CD4-positive, alpha-beta T cell (primary cell): ENCODE measurements at regions of chr4 and their contacts with region 1.

Region 1: GRCh38 chr4:83455281-83456129 is at the starts of genes HELQ and MRPS18C:
- DNase-seq: peak; percentile 85 to 99 (median 92)
- ATAC-seq: peak; percentile 86
- H3K4me3 ChIP-seq: peak within 1 kb of the TSS; percentile 88
- H3K4me3 Mint-ChIP-seq: peak within 1 kb of the TSS; percentile 99
- H3K27ac ChIP-seq: peak within 1 kb of the TSS; percentile 99 to 100
- H3K27ac Mint-ChIP-seq: peak within 1 kb of the TSS; percentile 100
- H3K4me1 ChIP-seq: peaks cover 12% of the 10 kb centered on the region
- H3K4me1 Mint-ChIP-seq: peaks cover 70% of the 10 kb centered on the region
- H3K27me3 ChIP-seq: no peaks in the 10 kb centered on the region
- H3K27me3 Mint-ChIP-seq: no peaks in the 10 kb centered on the region
- CTCF ChIP-seq: no peak
- total RNA-seq, gene HELQ: 21.5 to 24.1 TPM
- total RNA-seq, gene MRPS18C: 15.7 to 18.0 TPM

Region 2: GRCh38 chr4:82373816-82374625 is 1081.5 kb before region 1 on chr4 and contains the start of gene HNRNPD:
- CTCF ChIA-PET with region 1: no interaction called
- POLR2A ChIA-PET with region 1: interaction called, 3 read pairs
- intact Hi-C with region 1: loop called in 1 of 2 experiments (anchors 5 kb)
- DNase-seq: peak; percentile 77 to 99 (median 88)
- ATAC-seq: peak; percentile 83
- H3K4me3 ChIP-seq: peak within 1 kb of the TSS; percentile 97
- H3K4me3 Mint-ChIP-seq: peak within 1 kb of the TSS; percentile 99
- H3K27ac ChIP-seq: peak within 1 kb of the TSS; percentile 99
- H3K27ac Mint-ChIP-seq: peak within 1 kb of the TSS; percentile 98
- H3K4me1 ChIP-seq: peaks cover 24% of the 10 kb centered on the region
- H3K4me1 Mint-ChIP-seq: peaks cover 71% of the 10 kb centered on the region
- H3K27me3 ChIP-seq: no peaks in the 10 kb centered on the region
- H3K27me3 Mint-ChIP-seq: no peaks in the 10 kb centered on the region
- CTCF ChIP-seq: peak; percentile 11
- total RNA-seq, gene HNRNPD: 235 to 244 TPM

Region 3: GRCh38 chr4:82851885-82852750 is 603.4 kb before region 1 on chr4:
- CTCF ChIA-PET with region 1: no interaction called
- POLR2A ChIA-PET with region 1: no interaction called
- intact Hi-C with region 1: no loop called
- DNase-seq: peak in 3 of 14 experiments; percentile 58 to 62 (median 58)
- ATAC-seq: peak; percentile 49
- H3K4me3 ChIP-seq: no peak overlapping the region
- H3K4me3 Mint-ChIP-seq: no peak overlapping the region
- H3K27ac ChIP-seq: no peak overlapping the region
- H3K27ac Mint-ChIP-seq: peak overlapping the region; percentile 56
- H3K4me1 ChIP-seq: no peaks in the 10 kb centered on the region
- H3K4me1 Mint-ChIP-seq: peaks cover 6% of the 10 kb centered on the region
- H3K27me3 ChIP-seq: no peaks in the 10 kb centered on the region
- H3K27me3 Mint-ChIP-seq: no peaks in the 10 kb centered on the region
- CTCF ChIP-seq: peak; percentile 34

Region 4: GRCh38 chr4:82890901-82891706 is 564.4 kb before region 1 on chr4 and contains the start of gene SEC31A:
- CTCF ChIA-PET with region 1: no interaction called
- POLR2A ChIA-PET with region 1: interaction called, 4 read pairs
- intact Hi-C with region 1: loop called in 1 of 2 experiments (anchors 5 kb)
- DNase-seq: peak; percentile 93 to 99 (median 96)
- ATAC-seq: peak; percentile 91
- H3K4me3 ChIP-seq: peak within 1 kb of the TSS; percentile 93
- H3K4me3 Mint-ChIP-seq: peak within 1 kb of the TSS; percentile 91
- H3K27ac ChIP-seq: peak within 1 kb of the TSS; percentile 87 to 95
- H3K27ac Mint-ChIP-seq: peak within 1 kb of the TSS; percentile 99
- H3K4me1 ChIP-seq: peaks cover 11% of the 10 kb centered on the region
- H3K4me1 Mint-ChIP-seq: peaks cover 49% of the 10 kb centered on the region
- H3K27me3 ChIP-seq: no peaks in the 10 kb centered on the region
- H3K27me3 Mint-ChIP-seq: no peaks in the 10 kb centered on the region
- CTCF ChIP-seq: no peak
- total RNA-seq, gene SEC31A: 130 to 131 TPM

Region 5: DNA sequence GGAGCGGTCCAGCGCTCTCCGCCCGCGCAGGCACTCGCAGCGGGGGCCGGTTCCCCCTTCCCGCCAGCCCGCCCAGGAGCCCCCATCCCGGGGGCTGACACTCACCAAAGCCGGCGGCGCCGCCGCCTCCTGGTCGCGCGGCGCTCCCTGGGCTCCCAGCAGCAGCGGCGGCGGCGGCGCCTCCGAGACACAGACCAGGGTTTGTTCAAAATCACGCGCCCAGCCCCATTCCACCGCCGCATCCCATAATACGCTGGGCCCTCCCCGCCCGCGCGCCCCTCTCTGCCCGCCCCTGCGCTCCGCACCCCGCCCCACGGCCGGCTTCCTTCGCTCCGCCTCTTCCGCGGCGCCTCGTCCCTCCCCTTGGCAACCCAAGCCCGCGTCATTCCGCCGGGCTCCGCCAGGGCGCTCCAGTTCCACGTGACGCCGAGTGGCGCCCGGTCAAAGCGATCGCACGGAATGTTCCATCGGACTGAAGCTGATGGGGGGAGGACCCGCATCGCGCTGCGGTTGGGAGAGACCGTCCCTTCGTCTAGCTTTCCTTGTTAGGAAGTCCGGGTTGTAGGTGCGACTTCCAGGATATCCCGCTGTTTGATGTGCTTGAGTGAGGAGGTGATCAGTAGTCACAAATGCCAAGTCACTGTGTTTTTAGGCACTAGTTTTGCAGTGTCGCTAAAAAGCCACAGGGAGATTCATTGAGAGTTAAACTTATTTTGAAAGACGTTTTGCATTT is 442.7 kb before region 1 on chr4:
- CTCF ChIA-PET with region 1: no interaction called
- POLR2A ChIA-PET with region 1: interaction called, 9 read pairs
- intact Hi-C with region 1: loop called in 1 of 2 experiments (anchors 1 kb)
- DNase-seq: peak; percentile 94 to 99 (median 96)
- ATAC-seq: peak; percentile 85
- H3K4me3 ChIP-seq: peak overlapping the region; percentile 71
- H3K4me3 Mint-ChIP-seq: peak overlapping the region; percentile 97
- H3K27ac ChIP-seq: peak overlapping the region; percentile 33 to 49
- H3K27ac Mint-ChIP-seq: peak overlapping the region; percentile 91
- H3K4me1 ChIP-seq: peaks cover 26% of the 10 kb centered on the region
- H3K4me1 Mint-ChIP-seq: peaks cover 58% of the 10 kb centered on the region
- H3K27me3 ChIP-seq: no peaks in the 10 kb centered on the region
- H3K27me3 Mint-ChIP-seq: no peaks in the 10 kb centered on the region
- CTCF ChIP-seq: peak; percentile 56

Region 6: DNA sequence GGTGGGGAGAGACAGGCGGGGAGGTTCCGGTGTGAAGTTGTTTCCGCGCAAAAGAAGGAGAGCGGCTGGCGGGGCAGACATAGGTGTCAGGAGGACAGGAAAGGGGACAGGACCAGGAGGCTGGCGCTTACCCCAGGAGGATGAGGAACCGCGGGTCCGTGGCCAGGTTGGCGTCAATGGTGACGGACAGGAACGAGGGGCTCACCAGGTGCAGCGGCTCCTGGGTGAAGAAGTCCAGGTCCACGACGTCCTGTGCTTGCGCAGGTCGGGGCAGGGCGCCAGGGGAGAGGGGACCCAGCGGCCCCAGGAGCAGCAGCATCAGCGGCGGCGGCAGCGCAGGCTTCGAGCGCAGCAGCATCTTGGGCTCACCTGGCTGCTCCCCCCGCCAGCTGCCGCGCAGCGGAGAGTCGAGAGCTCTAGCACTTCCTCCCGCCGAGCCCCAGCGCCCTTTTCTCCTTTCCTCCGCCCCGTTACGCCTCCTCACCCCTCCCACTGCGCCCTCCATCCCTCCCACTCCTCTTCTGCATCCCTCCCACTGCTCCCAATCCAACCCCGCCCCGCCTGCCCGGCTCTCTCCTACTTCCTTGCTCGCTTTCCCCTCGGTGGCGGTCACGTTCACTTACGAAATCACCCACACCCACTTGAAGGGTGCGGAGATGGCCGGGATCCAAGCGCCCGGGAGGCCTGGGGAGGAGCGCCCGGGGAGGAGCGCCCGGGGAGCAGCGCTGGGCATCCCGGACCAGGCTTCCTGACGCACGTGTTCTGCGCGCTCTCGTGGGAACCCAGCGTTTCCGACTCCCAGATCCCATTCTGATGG is 120.9 kb before region 1 on chr4 and contains the start of gene HPSE:
- CTCF ChIA-PET with region 1: no interaction called
- POLR2A ChIA-PET with region 1: interaction called, 5 read pairs
- intact Hi-C with region 1: loop called in 1 of 2 experiments (anchors 10 kb)
- DNase-seq: peak; percentile 53 to 85 (median 68)
- ATAC-seq: peak; percentile 95
- H3K4me3 ChIP-seq: peak within 1 kb of the TSS; percentile 86
- H3K4me3 Mint-ChIP-seq: peak within 1 kb of the TSS; percentile 94
- H3K27ac ChIP-seq: peak within 1 kb of the TSS; percentile 19 to 45
- H3K27ac Mint-ChIP-seq: peak within 1 kb of the TSS; percentile 73
- H3K4me1 ChIP-seq: peaks cover 34% of the 10 kb centered on the region
- H3K4me1 Mint-ChIP-seq: peaks cover 33% of the 10 kb centered on the region
- H3K27me3 ChIP-seq: no peaks in the 10 kb centered on the region
- H3K27me3 Mint-ChIP-seq: no peaks in the 10 kb centered on the region
- CTCF ChIP-seq: no peak
- total RNA-seq, gene HPSE: 1.5 to 2.1 TPM

Region 7: DNA sequence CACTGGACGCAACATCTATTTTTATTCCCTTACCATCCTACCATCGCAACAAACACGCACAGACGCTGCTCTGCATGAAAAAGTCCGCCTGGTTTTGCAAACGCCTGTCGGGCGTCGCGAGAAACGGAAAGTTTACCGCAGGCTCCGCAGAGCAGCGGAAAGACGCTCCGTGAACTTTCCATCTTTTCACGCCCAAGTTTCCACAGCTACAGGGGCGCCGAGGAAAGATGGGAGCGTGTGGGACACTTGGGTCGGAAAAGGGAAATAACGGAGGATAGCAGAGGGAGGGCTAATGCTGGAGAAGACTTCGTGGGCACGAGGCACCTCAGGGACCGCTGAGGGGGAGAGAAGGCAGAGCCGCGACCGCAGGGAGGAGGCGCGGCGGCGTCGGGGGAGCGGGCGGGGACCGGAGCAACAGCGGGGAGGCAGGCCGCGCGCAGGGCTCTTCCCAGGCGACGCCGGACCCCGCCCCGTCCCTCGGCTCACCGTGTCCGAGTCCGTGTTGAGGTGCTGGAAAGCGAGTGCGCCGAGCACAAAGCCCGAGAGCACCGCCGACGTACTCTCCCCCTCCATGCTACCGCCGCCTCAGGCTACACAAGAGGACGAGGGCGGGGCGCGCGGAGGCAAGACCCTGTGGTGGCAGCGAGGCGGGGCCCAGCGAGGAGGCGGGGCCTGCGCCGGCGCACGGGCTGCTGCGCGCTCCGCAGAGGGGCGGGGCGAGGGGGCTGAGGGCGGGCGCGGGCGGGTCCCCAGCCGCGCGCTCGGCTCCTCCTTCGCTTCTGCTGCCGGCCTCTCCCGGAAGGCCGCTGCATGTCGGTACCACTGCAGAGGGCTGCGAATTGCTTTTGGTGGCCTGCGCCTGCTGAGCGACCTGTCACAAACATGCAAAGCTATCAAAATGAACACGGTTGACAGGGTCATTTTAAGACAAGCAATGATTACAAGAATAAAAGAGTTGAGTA is 29.3 kb after region 1 on chr4 and contains the start of gene ABRAXAS1:
- CTCF ChIA-PET with region 1: interaction called, 3 read pairs
- POLR2A ChIA-PET with region 1: interaction called, 67 read pairs
- intact Hi-C with region 1: loop called (anchors 1 kb)
- DNase-seq: peak; percentile 87 to 99 (median 94)
- ATAC-seq: peak; percentile 91
- H3K4me3 ChIP-seq: peak within 1 kb of the TSS; percentile 71
- H3K4me3 Mint-ChIP-seq: peak within 1 kb of the TSS; percentile 94
- H3K27ac ChIP-seq: peak within 1 kb of the TSS; percentile 47 to 71
- H3K27ac Mint-ChIP-seq: peak within 1 kb of the TSS; percentile 92
- H3K4me1 ChIP-seq: peaks cover 17% of the 10 kb centered on the region
- H3K4me1 Mint-ChIP-seq: peaks cover 32% of the 10 kb centered on the region
- H3K27me3 ChIP-seq: no peaks in the 10 kb centered on the region
- H3K27me3 Mint-ChIP-seq: no peaks in the 10 kb centered on the region
- CTCF ChIP-seq: no peak
- total RNA-seq, gene ABRAXAS1: 19.3 to 19.5 TPM